IMR-90 (cell line): ENCODE measurements at regions of chr2 and their contacts with region 1.

Region 1: DNA sequence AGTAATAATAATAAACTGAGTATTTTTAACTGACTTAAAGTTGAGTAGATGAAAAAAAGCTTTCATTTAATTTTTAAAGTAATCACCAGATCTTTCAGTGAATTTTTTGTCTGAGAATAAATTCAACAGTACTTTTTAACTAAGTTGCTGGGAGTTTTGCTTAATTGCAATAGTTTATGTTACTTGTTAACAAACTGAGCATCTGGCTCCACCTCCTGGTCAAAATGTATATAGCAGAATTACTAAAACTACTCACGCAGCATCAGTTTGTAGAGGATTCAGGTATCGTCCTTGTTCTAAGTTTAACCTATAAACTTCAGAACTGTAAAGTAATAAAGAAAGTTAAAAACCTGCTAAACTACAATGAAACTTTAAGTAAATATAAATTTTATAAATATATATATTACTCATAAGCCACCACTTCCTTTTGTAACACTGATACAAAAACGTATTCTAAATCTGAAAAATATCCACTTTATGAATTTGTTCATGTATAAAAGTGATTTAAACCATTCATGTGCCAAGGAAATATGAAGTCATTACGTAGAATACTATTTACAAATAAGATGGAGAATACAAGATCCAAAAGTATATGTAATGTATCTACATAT is 21.3 kb downstream of the NOL10 start:
- DNase-seq: peak; percentile 69
- ATAC-seq: peak; percentile 74
- H3K4me3 ChIP-seq: no peak overlapping the region
- H3K27ac ChIP-seq: no peak overlapping the region
- H3K4me1 ChIP-seq: no peaks in the 10 kb centered on the region
- H3K27me3 ChIP-seq: no peaks in the 10 kb centered on the region
- CTCF ChIP-seq: peak; percentile 65
- POLR2A ChIP-seq: no peak
- RAD21 ChIP-seq: peak; percentile 61

Region 2: DNA sequence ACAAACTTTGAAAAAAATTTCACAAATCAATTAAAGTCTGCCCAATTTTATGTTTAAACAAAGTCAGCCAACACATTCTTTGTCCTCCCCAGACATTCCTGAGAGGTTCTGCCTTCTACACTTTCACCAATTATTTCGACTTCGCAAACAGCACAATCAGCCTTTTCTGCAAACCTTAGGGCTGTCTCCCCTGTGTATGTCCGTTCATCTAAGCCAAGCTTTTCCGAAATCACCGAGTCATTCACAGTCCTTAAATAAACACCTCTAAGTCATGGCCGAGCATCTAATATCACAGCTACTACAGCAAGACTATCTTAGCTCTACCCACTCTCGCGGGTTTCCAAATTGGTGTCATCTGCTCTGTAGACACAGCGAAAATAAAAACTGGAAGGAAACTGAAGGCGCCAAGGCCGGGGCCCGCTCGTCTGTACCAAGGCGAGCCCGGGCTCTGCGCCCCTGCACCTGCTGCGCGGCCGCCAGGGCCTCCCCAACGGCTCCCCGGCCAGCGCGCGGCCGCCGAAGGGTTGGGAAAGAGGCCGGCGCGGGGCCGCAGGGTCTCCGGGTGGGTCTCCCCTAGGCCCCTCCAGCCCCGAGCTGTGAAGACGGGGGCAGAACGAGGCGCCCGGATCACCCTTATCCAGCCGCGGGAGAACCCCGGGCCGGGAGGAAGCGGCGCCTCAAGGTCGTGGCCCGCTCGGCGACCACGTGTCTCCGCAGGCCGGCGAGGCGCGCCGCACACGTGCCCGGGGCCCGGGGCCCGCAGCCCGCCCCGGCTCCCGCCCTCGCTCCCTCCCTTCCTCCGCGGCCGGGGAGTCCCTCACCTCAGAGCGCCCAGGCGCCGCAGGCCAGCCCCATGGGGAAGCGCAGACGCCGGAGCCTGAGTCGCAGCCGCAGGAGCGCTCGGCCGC is 221.0 kb before region 1 on chr2:
- CTCF ChIA-PET with region 1: interaction called, 3 read pairs
- POLR2A ChIA-PET with region 1: no interaction called
- dilution Hi-C with region 1: no loop called
- in situ Hi-C with region 1: no loop called
- intact Hi-C with region 1: loop called (anchors 2 kb)
- DNase-seq: peak; percentile 47
- ATAC-seq: peak; percentile 4
- H3K4me3 ChIP-seq: peak overlapping the region; percentile 70
- H3K27ac ChIP-seq: peak overlapping the region; percentile 47; the same call in 1 of the 2 replicates
- H3K4me1 ChIP-seq: peaks cover 10% of the 10 kb centered on the region
- H3K27me3 ChIP-seq: no peaks in the 10 kb centered on the region
- CTCF ChIP-seq: no peak
- POLR2A ChIP-seq: no peak
- RAD21 ChIP-seq: no peak

Region 3: DNA sequence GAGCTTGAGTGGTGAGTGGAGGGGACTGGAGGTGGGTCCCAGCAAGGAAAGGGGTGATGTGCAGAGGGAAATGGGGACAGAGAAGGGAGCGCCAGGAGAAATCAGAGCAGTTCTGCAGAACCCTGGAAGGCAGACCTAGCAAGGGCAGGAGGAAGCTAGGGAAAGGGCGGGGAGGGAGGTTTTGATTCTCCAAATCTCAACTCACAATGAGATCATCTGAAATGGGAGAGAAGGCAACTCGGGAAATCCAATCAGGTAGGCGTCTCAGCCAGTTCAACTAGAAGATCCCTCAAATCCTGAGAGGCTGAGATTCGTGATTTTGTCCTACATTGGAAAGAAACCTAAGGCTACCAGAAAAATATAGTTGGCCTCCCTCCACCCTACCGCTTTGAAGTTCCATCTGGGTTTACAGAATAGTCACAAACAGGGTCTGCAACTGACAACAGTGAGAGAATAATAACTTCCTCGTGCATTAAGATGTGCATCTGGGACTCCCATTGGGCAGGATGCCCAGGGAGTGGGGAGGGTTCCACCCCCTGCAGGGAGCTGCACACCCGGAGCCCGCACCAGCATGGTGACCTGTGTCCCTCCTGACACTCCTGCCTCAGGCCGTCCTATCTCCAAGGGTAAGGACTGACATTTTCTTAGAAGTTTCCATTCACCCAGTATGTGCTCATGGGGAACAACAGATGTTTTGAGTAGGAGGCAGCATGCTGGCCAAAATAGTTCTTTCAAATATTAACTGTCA is 107.0 kb before region 1 on chr2:
- CTCF ChIA-PET with region 1: no interaction called
- POLR2A ChIA-PET with region 1: no interaction called
- dilution Hi-C with region 1: no loop called
- in situ Hi-C with region 1: no loop called
- intact Hi-C with region 1: loop called (anchors 5 kb)
- DNase-seq: no peak
- ATAC-seq: no peak; the same call in 1 of the 2 replicates
- H3K4me3 ChIP-seq: no peak overlapping the region
- H3K27ac ChIP-seq: no peak overlapping the region
- H3K4me1 ChIP-seq: no peaks in the 10 kb centered on the region
- H3K27me3 ChIP-seq: no peaks in the 10 kb centered on the region
- CTCF ChIP-seq: no peak
- POLR2A ChIP-seq: no peak
- RAD21 ChIP-seq: no peak